Activated CD8-positive, alpha-beta T cell treated with anti-CD3 and anti-CD28 coated beads, Interleukin-2, amount 10 ng/mL, durations not matched to agents 7 days and 5 days (primary cell): ENCODE measurements at regions of chrX and their contacts with region 1.

Region 1: DNA sequence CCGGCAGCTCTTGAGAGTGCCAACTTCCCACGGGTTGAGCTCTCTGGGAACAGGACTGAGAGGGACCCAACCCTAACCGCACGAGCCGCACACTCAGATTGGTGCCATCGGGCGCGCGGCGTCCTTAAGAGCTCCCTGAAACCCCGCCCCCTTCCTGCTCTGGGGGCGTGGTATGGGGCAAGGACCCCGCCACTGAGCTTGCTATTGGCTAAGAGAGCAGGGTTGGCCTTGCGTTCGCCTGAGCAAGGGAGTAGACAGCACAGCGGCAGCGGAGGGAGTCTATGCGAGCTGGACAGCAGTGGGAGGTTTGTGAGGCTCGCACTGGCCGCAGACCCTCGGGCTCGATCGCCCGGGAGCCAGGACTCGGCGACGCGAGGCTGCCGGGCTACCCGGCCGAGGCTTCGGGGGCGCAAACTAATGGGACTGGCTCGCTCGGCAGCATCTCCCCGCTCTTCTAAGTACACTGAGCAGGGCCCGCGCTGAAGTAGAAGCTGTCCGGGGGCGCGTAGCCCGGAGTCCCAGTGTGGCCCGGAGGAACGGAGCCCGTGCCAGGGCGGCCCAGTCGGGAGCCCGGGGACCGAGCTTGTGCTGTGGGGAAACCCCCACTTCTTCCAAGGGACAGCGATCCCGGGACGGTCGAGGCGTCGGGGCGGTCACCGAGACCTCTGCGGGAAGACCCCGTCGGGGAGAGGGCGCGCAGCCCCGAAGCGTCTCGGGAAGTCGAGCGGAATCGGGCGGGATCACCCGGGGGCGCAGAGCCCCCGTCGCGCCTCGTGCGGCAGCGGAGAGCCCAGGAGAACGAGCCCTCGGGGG is at the start of gene EFNB1:
- DNase-seq: peak; percentile 89
- ATAC-seq: peak; percentile 89
- H3K4me3 Mint-ChIP-seq: peak within 1 kb of the TSS; percentile 80
- H3K27ac Mint-ChIP-seq: peak within 1 kb of the TSS; percentile 77
- H3K4me1 Mint-ChIP-seq: peaks cover 18% of the 10 kb centered on the region
- H3K27me3 Mint-ChIP-seq: peaks cover 5% of the 10 kb centered on the region
- total RNA-seq, gene EFNB1: 4.1 to 4.2 TPM

Region 2: GRCh38 chrX:69222103-69223090 is 393.5 kb after region 1 on chrX:
- CTCF ChIA-PET with region 1: interaction called, 45 read pairs
- POLR2A ChIA-PET with region 1: no interaction called
- DNase-seq: peak; percentile 72
- ATAC-seq: peak; percentile 78
- H3K4me3 Mint-ChIP-seq: no peak overlapping the region
- H3K27ac Mint-ChIP-seq: no peak overlapping the region
- H3K4me1 Mint-ChIP-seq: no peaks in the 10 kb centered on the region
- H3K27me3 Mint-ChIP-seq: peaks cover 2% of the 10 kb centered on the region

Region 3: DNA sequence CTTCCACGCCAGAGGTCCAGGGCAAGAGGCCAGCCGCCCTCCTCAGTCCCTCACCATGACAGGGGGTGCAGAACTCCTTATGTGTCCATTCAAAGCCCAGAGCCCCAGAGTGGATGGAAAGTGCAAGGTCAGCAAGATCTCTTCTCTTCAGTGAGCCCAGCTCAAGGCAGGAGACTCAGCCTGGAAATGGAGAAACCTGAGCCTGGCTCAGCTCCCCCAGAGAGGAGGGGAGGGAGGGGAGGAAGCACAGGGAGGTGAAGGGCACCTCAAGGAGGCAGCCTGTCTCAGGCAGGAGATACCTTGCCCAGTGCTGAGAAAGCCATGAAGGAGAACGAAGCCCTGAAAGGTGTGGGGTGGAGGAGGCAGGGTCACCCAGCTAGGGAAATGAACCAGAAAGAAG is 458.1 kb after region 1 on chrX:
- CTCF ChIA-PET with region 1: interaction called, 12 read pairs
- POLR2A ChIA-PET with region 1: no interaction called
- DNase-seq: no peak
- ATAC-seq: no peak
- H3K4me3 Mint-ChIP-seq: no peak overlapping the region
- H3K27ac Mint-ChIP-seq: no peak overlapping the region
- H3K4me1 Mint-ChIP-seq: no peaks in the 10 kb centered on the region
- H3K27me3 Mint-ChIP-seq: no peaks in the 10 kb centered on the region